ENCODE measurements at regions of chr6 and their contacts with region 1.

Region 1: GRCh38 chr6:29834564-29835436 is 7.2 kb downstream of the HLA-G start:
- DNase-seq: no peak
- H3K4me3 ChIP-seq: no peak overlapping the region
- H3K27ac ChIP-seq: no peak overlapping the region
- H3K4me1 ChIP-seq: no peaks in the 10 kb centered on the region
- H3K27me3 ChIP-seq: peaks cover 0 to 40% of the 10 kb centered on the region in 2 donors
- CTCF ChIP-seq: peak; percentile 44 to 71

Region 2: DNA sequence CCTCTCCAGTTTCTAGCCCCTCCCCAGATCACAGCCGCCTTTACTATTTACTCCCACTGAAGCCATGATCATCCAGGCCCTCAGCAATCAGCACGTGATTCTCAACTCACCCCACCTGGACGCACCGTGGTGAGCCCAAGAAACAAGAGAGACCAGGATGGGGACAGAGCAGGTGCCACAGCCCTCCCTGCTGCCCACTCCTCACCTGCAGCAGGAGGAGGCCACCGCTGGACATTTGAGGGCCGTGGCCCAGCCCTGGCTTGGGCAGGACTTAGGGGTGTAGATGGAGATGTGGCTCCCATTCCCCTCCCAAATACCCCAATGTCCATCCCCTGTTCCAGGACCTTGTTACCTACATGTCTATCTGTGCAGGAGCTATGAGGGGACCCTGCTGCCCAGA is 91.2 kb before region 1 on chr6:
- intact Hi-C with region 1: loop called (anchors 5 kb)
- DNase-seq: no peak
- H3K4me3 ChIP-seq: no peak overlapping the region
- H3K27ac ChIP-seq: no peak overlapping the region
- H3K4me1 ChIP-seq: peaks cover 0 to 11% (median 8%) of the 10 kb centered on the region in 4 donors
- H3K27me3 ChIP-seq: no peaks in the 10 kb centered on the region
- CTCF ChIP-seq: no peak